ENCODE measurements at regions of chr1 and their contacts with region 1.

Region 1: DNA sequence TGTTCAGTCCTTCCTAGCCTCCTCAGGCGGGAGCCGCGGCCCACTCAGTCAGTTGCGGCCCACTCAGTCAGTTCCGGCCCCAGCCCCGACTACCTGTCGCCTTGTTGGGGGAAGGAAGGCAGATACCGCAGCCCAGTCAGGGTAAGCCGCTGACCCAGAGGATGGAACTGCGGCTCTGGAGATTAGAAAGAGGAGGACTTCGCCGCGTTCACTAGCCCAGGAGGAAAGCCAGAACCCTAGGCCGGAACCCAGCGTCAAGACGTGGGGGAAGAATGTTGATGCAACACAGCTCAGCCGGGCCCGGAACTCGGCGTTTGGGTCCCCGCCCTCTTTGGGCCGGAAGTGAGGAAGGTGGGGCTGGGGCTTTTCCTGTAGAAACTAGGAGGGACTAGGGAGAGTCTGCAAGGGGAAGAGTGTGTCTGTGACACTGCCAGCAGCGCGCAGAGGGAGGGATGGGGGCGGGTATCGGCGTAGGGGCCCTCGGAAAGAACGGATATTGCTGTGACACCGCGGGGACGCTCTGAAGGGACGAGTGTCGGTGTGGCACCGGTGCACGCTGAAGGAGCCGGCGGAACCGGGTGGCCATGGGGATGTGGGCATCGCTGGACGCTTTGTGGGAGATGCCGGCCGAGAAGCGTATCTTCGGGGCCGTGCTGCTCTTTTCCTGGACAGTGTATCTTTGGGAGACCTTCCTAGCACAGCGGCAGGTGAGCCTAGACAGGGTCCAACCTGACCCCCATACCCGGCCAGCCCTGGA is at the start of gene ZMPSTE24:
- DNase-seq: peak; percentile 97
- ATAC-seq: peak; percentile 96
- H3K4me3 ChIP-seq: peak within 1 kb of the TSS; percentile 99 to 100
- H3K27ac ChIP-seq: peak within 1 kb of the TSS; percentile 94
- H3K4me1 ChIP-seq: peaks cover 4 to 6% of the 10 kb centered on the region in 2 experiments
- H3K27me3 ChIP-seq: no peaks in the 10 kb centered on the region
- CTCF ChIP-seq: no peak
- POLR2A ChIP-seq: peak; percentile 63
- RAD21 ChIP-seq: no peak
- total RNA-seq, gene ZMPSTE24: 39.6 TPM

Region 2: GRCh38 chr1:40040511-40041465 is 217.1 kb before region 1 on chr1 and contains the start of gene CAP1:
- CTCF ChIA-PET with region 1: no interaction called
- POLR2A ChIA-PET with region 1: no interaction called
- RAD21 ChIA-PET with region 1: no interaction called
- intact Hi-C with region 1: loop called (anchors 5 kb)
- DNase-seq: peak; percentile 95
- ATAC-seq: peak; percentile 92
- H3K4me3 ChIP-seq: peak within 1 kb of the TSS; percentile 91 to 95
- H3K27ac ChIP-seq: peak within 1 kb of the TSS; percentile 89
- H3K4me1 ChIP-seq: peaks cover 15 to 25% of the 10 kb centered on the region in 2 experiments
- H3K27me3 ChIP-seq: no peaks in the 10 kb centered on the region
- CTCF ChIP-seq: no peak
- POLR2A ChIP-seq: peak; percentile 28
- RAD21 ChIP-seq: no peak; the same call in 1 of the 2 replicates
- total RNA-seq, gene CAP1: 274 TPM

Region 3: DNA sequence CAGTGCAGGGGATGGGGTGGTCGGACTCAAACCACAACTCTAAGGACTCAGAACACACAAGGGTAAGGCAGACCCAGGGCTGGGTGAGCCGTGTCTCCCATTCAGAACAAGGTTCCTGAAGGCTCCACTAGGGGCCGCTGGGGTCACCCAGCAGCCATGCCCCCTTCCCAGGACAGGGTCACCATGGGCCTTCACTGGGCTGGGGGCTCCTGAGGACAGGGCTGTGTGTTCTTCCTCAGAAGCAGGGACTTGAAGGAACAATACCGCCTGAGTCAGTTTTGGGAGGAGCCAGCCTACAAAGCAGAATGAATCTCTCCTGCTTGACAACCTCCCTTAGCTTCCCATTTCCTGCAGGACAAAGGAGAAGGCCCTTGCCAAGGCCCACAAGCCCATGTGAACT is 392.2 kb after region 1 on chr1:
- CTCF ChIA-PET with region 1: no interaction called
- POLR2A ChIA-PET with region 1: no interaction called
- RAD21 ChIA-PET with region 1: no interaction called
- intact Hi-C with region 1: no loop called
- DNase-seq: no peak
- ATAC-seq: peak; percentile 46
- H3K4me3 ChIP-seq: no peak overlapping the region
- H3K27ac ChIP-seq: no peak overlapping the region
- H3K4me1 ChIP-seq: peaks cover 13 to 62% of the 10 kb centered on the region in 2 experiments
- H3K27me3 ChIP-seq: no peaks in the 10 kb centered on the region
- CTCF ChIP-seq: peak in 2 of 3 experiments; percentile 45 to 53; a peak in 4 of 6 replicates
- POLR2A ChIP-seq: no peak
- RAD21 ChIP-seq: no peak